Natural killer cell (primary cell): ENCODE measurements at regions of chr12 and their contacts with region 1.

Region 1: GRCh38 chr12:53180220-53180930 is at the starts of genes CSAD and ZNF740:
- DNase-seq: peak; percentile 90 to 99
- ATAC-seq: peak; percentile 96 to 100 (median 97)
- H3K4me3 ChIP-seq: peak within 1 kb of the TSS; percentile 74
- H3K4me3 Mint-ChIP-seq: peak within 1 kb of the TSS; percentile 95
- H3K27ac ChIP-seq: peak within 1 kb of the TSS; percentile 91
- H3K27ac Mint-ChIP-seq: peak within 1 kb of the TSS; percentile 93 to 97
- H3K4me1 ChIP-seq: peaks cover 20% of the 10 kb centered on the region
- H3K4me1 Mint-ChIP-seq: peaks cover 34 to 51% of the 10 kb centered on the region in 2 donors
- H3K27me3 ChIP-seq: no peaks in the 10 kb centered on the region
- H3K27me3 Mint-ChIP-seq: no peaks in the 10 kb centered on the region
- CTCF ChIP-seq: no peak
- total RNA-seq, gene CSAD: 50.8 to 54.4 (median 53.0) TPM
- total RNA-seq, gene ZNF740: 37.1 to 65.9 (median 45.3) TPM

Region 2: DNA sequence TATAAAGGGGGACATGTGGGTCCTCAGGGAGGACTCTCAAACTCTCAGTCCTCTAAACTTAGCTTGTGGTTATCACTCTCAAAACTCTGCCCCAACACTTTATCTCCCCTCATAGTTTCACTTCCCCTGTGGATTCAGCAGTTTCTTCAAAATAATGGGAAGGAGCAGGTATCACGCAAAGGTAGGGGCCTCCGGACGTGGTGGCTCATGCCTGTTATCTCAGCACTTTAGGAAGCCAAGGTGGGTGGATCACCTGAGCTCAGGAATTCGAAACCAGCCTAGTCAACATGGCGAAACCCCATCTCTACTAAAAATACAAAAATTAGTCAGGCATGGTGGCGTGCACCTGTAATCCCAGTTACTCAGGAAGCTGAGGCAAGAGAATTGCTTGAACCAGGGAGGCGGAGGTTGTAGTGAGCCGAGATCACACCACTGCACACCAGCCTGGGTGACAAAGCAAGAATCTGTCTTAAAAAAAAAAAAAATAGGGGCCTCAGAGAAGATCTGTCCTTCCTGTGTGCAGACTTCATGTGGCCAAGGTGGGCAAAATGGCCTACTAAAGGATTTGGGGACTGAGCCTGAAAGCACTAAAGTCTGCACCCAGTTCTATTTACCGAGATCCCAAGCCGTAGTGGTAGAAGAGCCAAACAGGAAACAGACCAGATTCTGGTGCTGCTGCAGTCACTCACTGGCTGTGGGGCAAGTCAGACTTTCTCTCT is 20.2 kb after region 1 on chr12:
- intact Hi-C with region 1: loop called (anchors 2 kb)
- DNase-seq: peak in 1 of 2 donors; percentile 58
- ATAC-seq: peak; percentile 27 to 33 (median 27)
- H3K4me3 ChIP-seq: no peak overlapping the region
- H3K4me3 Mint-ChIP-seq: peak overlapping the region; percentile 82
- H3K27ac ChIP-seq: peak overlapping the region; percentile 0
- H3K27ac Mint-ChIP-seq: peak overlapping the region; percentile 63 to 69
- H3K4me1 ChIP-seq: peaks cover 60% of the 10 kb centered on the region
- H3K4me1 Mint-ChIP-seq: peaks cover 50 to 76% of the 10 kb centered on the region in 2 donors
- H3K27me3 ChIP-seq: no peaks in the 10 kb centered on the region
- H3K27me3 Mint-ChIP-seq: no peaks in the 10 kb centered on the region
- CTCF ChIP-seq: no peak

Region 3: DNA sequence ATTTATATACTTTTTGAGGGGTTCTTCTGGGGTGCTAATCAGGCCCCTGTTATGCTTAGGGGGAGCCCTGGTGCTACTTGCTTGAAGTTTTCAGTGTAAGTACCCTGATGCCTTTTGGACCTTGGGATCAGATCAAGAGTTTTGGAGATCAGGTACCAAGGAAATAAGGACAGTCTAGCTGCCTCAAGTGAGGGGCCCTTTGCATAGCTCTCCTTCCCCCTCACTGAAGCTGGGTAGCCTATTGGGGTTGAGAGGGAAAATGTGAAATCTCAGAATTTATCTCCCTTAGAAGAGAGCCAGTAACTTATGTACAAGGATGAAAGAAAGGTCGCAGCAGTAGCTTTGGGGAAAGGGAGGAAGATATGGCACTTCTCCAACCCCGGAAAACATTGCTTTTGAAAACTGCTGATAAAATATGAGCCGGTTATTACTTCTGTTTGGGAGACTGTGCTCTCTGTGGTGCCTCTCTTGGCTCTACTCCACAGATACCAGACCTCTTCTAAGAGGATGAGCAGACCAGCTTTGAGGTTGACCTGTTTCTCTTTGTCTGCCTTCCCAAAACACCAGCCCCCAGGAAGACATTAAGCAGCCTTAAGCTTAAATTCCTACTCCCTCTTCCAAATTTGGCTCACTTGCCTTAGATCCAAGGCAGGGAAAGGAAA is 234.5 kb after region 1 on chr12:
- intact Hi-C with region 1: no loop called
- DNase-seq: no peak
- ATAC-seq: no peak
- H3K4me3 ChIP-seq: no peak overlapping the region
- H3K4me3 Mint-ChIP-seq: no peak overlapping the region
- H3K27ac ChIP-seq: no peak overlapping the region
- H3K27ac Mint-ChIP-seq: peak overlapping the region in 1 of 2 donors; percentile 78
- H3K4me1 ChIP-seq: peaks cover 12% of the 10 kb centered on the region
- H3K4me1 Mint-ChIP-seq: peaks cover 13 to 15% of the 10 kb centered on the region in 2 donors
- H3K27me3 ChIP-seq: no peaks in the 10 kb centered on the region
- H3K27me3 Mint-ChIP-seq: no peaks in the 10 kb centered on the region
- CTCF ChIP-seq: no peak